ENCODE measurements at regions of chr16 and their contacts with region 1.

Region 1: GRCh38 chr16:3282730-3283524 is at the start of gene ZNF263:
- DNase-seq: peak; percentile 96
- ATAC-seq: peak; percentile 89
- H3K4me3 ChIP-seq: peak within 1 kb of the TSS; percentile 78 to 100 (median 95)
- H3K4me3 Mint-ChIP-seq: peak within 1 kb of the TSS; percentile 97
- H3K27ac ChIP-seq: peak within 1 kb of the TSS; percentile 97 to 99
- H3K27ac Mint-ChIP-seq: peak within 1 kb of the TSS; percentile 98
- H3K4me1 ChIP-seq: peaks cover 22 to 30% of the 10 kb centered on the region in 2 donors
- H3K4me1 Mint-ChIP-seq: peaks cover 37% of the 10 kb centered on the region
- H3K27me3 ChIP-seq: no peaks in the 10 kb centered on the region
- H3K27me3 Mint-ChIP-seq: no peaks in the 10 kb centered on the region
- CTCF ChIP-seq: no peak
- total RNA-seq, gene ZNF263: 43.0 and 46.0 TPM in 2 replicates

Region 2: DNA sequence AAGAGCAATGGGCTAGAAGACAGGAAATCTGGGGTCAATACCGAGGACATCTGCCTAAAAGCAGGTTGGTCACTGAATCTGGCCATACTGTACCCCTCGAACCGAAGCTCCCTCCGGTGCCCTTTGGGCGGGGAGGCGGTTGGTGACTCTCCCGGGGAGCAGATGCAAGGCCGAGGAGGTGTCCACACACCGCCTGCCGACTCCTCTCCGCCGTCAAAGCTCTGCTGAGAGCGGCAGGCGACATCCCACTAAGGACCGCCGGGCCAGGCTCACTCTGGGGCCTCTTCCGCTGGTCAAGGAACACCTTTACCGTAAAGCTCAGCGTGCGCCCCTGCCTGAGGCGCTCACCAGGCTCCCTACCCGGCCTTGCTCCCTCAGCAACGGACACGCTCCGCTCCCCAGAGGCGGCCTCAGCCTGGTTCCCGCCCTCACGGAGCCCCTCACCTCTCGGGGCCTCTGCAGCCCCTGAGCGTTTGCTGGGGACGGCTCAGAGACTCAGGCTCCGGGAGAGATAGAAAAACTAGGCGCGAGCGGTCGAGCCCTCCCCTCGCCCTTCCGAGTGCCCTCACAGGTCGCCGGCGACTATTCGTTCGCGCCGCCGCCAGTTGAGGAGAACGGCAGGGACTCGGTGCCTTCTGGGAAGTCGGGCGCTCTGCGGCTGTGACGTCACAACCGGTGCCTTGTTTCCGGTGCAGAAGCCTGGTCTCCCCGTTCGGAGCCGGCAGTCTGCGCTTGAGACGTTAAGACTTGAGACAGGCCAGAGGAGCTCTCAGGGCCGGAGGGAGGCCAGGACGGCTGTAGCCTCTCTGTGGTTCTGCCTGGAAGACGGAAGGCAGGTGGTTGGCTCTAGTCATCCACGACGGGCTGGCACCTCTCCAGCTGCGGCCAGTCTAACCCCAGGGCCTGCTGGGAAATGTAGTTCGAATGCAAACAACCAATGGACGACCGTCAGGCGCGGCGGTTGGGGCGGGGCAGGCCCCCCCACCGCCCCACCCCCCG is 48.1 kb before region 1 on chr16 and contains the start of gene ZNF200:
- CTCF ChIA-PET with region 1: interaction called, 3 read pairs
- POLR2A ChIA-PET with region 1: interaction called, 7 read pairs
- intact Hi-C with region 1: loop called (anchors 1 kb)
- DNase-seq: peak; percentile 98
- ATAC-seq: peak; percentile 85
- H3K4me3 ChIP-seq: peak within 1 kb of the TSS; percentile 75 to 95 (median 95)
- H3K4me3 Mint-ChIP-seq: peak within 1 kb of the TSS; percentile 94
- H3K27ac ChIP-seq: peak within 1 kb of the TSS; percentile 96
- H3K27ac Mint-ChIP-seq: peak within 1 kb of the TSS; percentile 97
- H3K4me1 ChIP-seq: peaks cover 12 to 16% of the 10 kb centered on the region in 2 donors
- H3K4me1 Mint-ChIP-seq: peaks cover 23% of the 10 kb centered on the region
- H3K27me3 ChIP-seq: no peaks in the 10 kb centered on the region
- H3K27me3 Mint-ChIP-seq: no peaks in the 10 kb centered on the region
- CTCF ChIP-seq: no peak
- total RNA-seq, gene ZNF200: 16.1 and 20.1 TPM in 2 replicates

Region 3: DNA sequence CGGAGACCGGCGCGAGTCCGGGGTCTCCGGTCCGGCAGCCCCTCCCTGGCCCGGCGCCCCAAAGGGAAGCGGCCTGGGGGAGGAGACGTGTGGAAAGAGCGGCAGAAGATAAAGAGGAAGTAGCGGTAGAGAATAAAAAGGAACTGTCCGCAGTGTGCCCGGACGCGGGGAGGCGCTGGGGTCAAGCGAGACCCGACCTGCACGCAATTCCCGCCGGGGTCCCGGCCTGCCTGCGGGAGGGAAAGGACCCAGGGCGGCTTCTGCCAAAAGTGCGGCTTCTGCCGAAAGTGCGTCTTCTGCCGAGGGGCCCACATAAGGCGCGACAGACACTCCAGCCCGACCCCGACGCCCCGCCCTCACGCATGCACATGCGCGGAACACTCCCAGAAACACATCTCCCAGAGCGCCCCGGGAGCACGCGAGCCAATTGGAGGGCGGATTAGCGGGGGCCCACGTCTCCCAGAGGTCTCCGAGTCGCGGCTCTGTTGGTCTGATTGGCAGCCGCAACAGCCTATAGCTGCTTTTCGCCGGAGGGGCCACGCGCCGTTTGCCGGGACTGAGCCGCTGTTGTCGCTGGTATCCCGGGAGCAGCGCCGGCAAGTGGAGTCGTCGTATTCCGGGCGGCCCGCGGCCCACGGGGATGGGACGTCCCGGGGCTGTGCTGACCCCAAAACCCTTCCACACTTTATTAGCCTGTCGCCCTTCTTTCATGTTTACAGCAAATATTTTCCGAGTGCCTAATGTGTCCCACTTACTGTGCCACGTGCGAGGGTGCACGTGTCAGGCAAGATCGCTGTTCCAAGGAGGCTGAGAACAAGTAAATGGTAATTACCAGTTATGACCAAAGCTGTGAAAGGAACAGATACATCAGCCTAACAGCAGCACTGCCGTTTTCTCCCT is 18.5 kb before region 1 on chr16:
- CTCF ChIA-PET with region 1: interaction called, 17 read pairs
- POLR2A ChIA-PET with region 1: interaction called, 16 read pairs
- intact Hi-C with region 1: loop called (anchors 1 kb)
- DNase-seq: peak; percentile 97
- ATAC-seq: peak; percentile 86
- H3K4me3 ChIP-seq: peak overlapping the region; percentile 75 to 84 (median 78)
- H3K4me3 Mint-ChIP-seq: peak overlapping the region; percentile 92
- H3K27ac ChIP-seq: peak overlapping the region; percentile 85 to 86
- H3K27ac Mint-ChIP-seq: peak overlapping the region; percentile 95
- H3K4me1 ChIP-seq: peaks cover 9 to 18% of the 10 kb centered on the region in 2 donors
- H3K4me1 Mint-ChIP-seq: peaks cover 28% of the 10 kb centered on the region
- H3K27me3 ChIP-seq: no peaks in the 10 kb centered on the region
- H3K27me3 Mint-ChIP-seq: no peaks in the 10 kb centered on the region
- CTCF ChIP-seq: peak; percentile 54

Region 4: GRCh38 chr16:3364774-3365427 is 82.0 kb after region 1 on chr16:
- CTCF ChIA-PET with region 1: no interaction called
- POLR2A ChIA-PET with region 1: no interaction called
- intact Hi-C with region 1: loop called (anchors 1 kb)
- DNase-seq: peak; percentile 92
- ATAC-seq: peak; percentile 94
- H3K4me3 ChIP-seq: peak overlapping the region; percentile 34 to 69 (median 64)
- H3K4me3 Mint-ChIP-seq: peak overlapping the region; percentile 85
- H3K27ac ChIP-seq: peak overlapping the region; percentile 88 to 90
- H3K27ac Mint-ChIP-seq: peak overlapping the region; percentile 92
- H3K4me1 ChIP-seq: peaks cover 6 to 15% of the 10 kb centered on the region in 2 donors
- H3K4me1 Mint-ChIP-seq: peaks cover 5% of the 10 kb centered on the region
- H3K27me3 ChIP-seq: peaks cover 0 to 11% (median 3%) of the 10 kb centered on the region in 4 experiments
- H3K27me3 Mint-ChIP-seq: peaks cover 24% of the 10 kb centered on the region
- CTCF ChIP-seq: no peak

Measured in B cell (primary cell).